GM10248 (cell line): ENCODE measurements at regions of chr1 and their contacts with region 1.

Region 1: DNA sequence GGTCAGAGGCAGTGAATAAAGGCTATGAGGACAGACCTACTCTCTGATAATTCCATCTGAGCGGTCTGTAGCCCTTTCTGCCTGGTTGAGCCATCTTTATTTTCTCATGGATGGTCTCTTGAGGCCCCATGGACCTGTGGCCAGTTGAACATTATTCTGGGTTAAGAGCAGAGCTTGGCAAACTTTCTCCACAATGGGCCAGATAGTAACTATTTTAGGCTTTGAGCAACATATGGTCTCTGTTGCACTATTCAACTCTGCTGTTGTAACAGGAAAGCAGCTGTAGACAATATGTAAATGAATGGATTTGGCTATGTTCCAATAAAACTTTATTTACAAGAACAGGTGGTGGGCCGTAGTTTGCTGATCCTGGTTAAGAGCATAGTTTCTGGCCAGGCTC is 62.7 kb downstream of the KAZN start:
- DNase-seq: no peak
- CTCF ChIP-seq: no peak

Region 2: GRCh38 chr1:14625572-14625971 is 35.6 kb before region 1 on chr1:
- CTCF ChIA-PET with region 1: no interaction called
- POLR2A ChIA-PET with region 1: no interaction called
- DNase-seq: no peak
- CTCF ChIP-seq: no peak

Region 3: DNA sequence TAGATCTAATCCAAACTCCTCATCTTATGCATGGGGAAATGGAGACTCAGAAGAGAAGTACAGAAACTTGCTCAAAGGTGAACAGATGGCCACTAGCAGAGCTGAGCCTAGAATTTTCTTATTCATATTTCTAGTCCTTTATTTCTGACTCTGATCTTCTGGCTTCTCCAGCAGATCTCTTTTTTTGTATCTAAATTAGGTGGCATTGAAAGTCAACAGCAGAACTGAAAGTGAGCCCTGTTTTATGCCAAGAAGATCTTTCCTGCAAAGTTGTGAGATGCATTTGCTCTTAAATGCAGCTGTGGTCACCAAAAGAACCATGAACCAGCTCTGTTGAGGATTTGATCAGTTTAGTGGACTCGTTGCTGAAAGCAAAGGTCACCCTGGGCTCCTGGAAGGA is 12.8 kb after region 1 on chr1:
- CTCF ChIA-PET with region 1: interaction called, 10 read pairs
- POLR2A ChIA-PET with region 1: no interaction called
- DNase-seq: no peak
- CTCF ChIP-seq: no peak